Mammary epithelial cell (primary cell): ENCODE measurements at regions of chr2 and their contacts with region 1.

Region 1: GRCh38 chr2:140863713-140864112 is 1267.1 kb downstream of the LRP1B start:
- DNase-seq: peak; percentile 40
- H3K4me3 ChIP-seq: no peak overlapping the region
- H3K27ac ChIP-seq: no peak overlapping the region
- H3K4me1 ChIP-seq: no peaks in the 10 kb centered on the region
- H3K27me3 ChIP-seq: no peaks in the 10 kb centered on the region
- CTCF ChIP-seq: peak; percentile 59 to 61

Region 2: GRCh38 chr2:139790807-139791752 is 1072.6 kb before region 1 on chr2:
- CTCF ChIA-PET with region 1: no interaction called
- dilution Hi-C with region 1: no loop called
- in situ Hi-C with region 1: no loop called
- intact Hi-C with region 1: loop called (anchors 2 kb)
- DNase-seq: peak; percentile 21
- H3K4me3 ChIP-seq: no peak overlapping the region
- H3K27ac ChIP-seq: no peak overlapping the region
- H3K4me1 ChIP-seq: no peaks in the 10 kb centered on the region
- H3K27me3 ChIP-seq: no peaks in the 10 kb centered on the region
- CTCF ChIP-seq: peak; percentile 12 to 53

Region 3: GRCh38 chr2:140586379-140586778 is 277.3 kb before region 1 on chr2:
- CTCF ChIA-PET with region 1: no interaction called
- dilution Hi-C with region 1: no loop called
- in situ Hi-C with region 1: no loop called
- intact Hi-C with region 1: loop called (anchors 2 kb)
- DNase-seq: peak; percentile 27
- H3K4me3 ChIP-seq: no peak overlapping the region
- H3K27ac ChIP-seq: no peak overlapping the region
- H3K4me1 ChIP-seq: no peaks in the 10 kb centered on the region
- H3K27me3 ChIP-seq: no peaks in the 10 kb centered on the region
- CTCF ChIP-seq: peak; percentile 55 to 80

Region 4: DNA sequence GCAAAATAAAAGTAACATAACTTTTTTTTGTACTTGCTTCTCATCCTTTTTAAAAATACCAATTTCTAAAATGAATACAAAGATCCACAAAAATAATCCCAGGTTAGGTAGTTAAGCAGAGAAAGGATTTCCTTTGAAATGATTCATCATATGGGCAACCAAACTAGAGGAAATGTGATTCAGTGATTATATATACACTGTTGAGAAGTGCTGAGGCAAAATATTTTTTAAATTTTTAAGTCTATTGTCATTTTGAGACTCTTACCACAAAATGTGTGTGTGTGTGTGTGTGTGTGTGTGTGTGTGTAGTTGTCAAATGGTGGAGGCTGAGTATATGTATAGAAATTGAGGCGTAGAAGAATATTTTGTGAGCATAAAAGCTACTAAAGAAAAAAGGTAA is 191.8 kb after region 1 on chr2:
- CTCF ChIA-PET with region 1: no interaction called
- dilution Hi-C with region 1: no loop called
- in situ Hi-C with region 1: no loop called
- intact Hi-C with region 1: no loop called
- DNase-seq: peak; percentile 47
- H3K4me3 ChIP-seq: no peak overlapping the region
- H3K27ac ChIP-seq: no peak overlapping the region
- H3K4me1 ChIP-seq: no peaks in the 10 kb centered on the region
- H3K27me3 ChIP-seq: no peaks in the 10 kb centered on the region
- CTCF ChIP-seq: no peak